Activated CD4-positive, alpha-beta memory T cell treated with anti-CD3 and anti-CD28 coated beads, Interleukin-2, amount 10 ng/mL, durations not matched to agents 7 days and 5 days (primary cell): ENCODE measurements at regions of chr1 and their contacts with region 1.

Region 1: DNA sequence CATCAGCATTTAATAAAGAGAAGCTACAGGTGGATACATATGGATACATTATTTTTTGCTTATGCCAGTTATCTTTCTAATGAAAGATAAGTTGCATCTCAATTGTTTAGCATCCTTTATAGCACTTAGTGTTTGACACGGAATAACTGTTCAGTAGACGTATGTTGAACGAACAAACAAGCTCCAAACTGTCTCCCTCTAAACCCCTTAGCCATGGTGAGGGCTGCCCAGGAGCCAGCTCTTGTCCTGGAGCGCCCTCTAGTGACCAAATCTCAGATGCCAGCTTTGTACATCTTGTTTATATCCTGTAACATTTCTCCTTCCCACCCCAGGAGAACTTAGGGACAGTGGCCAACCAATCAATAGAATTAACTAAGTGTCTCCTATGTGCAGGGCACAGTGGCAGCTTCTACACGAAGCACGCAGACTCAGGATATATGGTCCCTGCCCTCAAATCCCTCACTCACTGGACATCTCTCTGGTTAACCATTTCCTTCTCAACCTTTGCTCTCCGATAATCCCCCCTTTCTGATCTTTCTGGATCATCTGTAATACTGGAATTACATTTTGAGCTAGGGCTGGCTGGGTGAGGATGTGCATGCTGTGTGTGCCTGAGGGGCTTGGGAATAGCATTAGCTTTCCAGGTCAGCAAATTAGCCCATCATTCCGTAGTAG is 22.9 kb downstream of the KCNA10 start:
- DNase-seq: peak; percentile 82
- H3K4me3 Mint-ChIP-seq: no peak overlapping the region
- H3K27ac Mint-ChIP-seq: no peak overlapping the region
- H3K4me1 Mint-ChIP-seq: peaks cover 4% of the 10 kb centered on the region
- H3K27me3 Mint-ChIP-seq: peaks cover 3% of the 10 kb centered on the region

Region 2: DNA sequence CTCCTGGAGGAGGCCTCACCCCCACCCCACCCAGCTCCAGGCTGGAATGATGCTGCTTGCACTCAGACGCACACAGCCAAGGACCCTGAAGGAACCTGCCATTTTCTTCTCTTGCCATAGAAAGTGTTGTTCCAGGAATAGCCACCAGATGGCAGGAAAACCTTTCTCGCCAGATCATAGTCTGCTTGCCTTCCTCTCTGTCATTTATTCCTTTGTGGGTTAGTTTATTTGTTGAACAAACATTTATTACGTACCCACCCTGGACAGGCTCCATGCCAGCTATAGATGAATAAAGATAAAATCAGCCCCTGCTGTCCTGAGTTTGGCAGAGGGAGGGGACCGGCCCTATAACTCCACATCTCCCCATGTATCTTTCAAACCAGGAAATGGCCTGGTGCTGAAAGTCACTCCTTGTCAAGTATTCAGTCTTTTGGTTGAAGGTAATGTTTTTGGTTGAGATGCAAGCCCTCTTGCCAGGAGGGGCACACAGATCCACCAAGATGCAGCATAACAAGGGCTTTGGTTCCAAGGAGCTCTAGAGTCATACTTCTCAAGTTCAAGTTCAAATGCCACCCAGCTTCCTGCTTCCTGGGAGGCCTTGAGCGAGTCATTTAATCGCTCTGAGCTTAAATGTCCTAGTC is 292.9 kb before region 1 on chr1:
- CTCF ChIA-PET with region 1: interaction called, 48 read pairs
- POLR2A ChIA-PET with region 1: interaction called, 3 read pairs
- DNase-seq: peak; percentile 73
- H3K4me3 Mint-ChIP-seq: no peak overlapping the region
- H3K27ac Mint-ChIP-seq: peak overlapping the region; percentile 66
- H3K4me1 Mint-ChIP-seq: peaks cover 19% of the 10 kb centered on the region
- H3K27me3 Mint-ChIP-seq: no peaks in the 10 kb centered on the region

Region 3: DNA sequence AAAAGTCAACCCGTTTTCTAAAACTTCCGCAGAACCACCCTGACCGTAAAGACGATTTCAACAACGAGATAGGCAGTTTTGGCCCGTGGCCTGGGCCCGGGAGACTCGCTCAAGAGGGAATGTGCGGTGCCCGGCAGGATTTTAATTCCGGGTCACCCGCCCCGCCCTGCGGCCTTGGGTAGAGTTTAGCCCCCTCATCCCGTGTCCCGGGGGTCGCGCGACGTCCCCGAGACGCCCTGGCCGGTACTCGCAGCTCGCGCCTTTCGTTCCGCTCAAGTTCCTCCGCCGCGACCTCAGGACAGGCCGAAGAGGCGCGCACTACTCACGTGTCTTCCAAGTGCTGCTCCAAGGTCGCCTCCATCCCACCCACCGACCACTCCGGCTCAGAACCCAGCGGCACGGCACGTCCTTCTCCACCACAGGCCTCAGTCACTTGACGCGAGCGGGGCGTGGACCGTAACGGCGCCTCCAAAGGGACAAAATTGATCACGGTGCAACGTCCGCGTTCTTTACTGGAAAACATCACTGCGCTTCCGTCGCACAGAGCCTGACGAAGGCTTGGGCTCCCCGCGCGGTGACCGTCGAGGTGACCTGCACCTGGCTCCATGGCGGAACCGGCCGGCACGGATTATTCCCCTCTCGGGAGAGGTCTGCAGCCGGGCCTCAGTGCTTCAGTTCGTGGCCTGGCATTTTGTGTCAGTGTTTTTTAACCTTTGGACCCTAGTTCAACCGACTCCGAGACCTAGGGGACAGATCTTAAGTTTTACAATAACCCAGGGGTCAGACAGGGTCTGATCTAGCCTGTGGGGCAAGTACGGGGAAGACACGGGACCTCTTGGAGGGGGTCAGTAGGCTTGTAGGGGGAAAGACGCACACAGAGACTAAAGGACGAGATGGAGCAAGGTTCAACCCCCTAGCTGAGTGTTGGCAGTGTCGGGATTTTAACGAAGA is 88.5 kb before region 1 on chr1 and contains the start of gene LAMTOR5:
- CTCF ChIA-PET with region 1: interaction called, 100 read pairs
- POLR2A ChIA-PET with region 1: interaction called, 6 read pairs
- DNase-seq: peak; percentile 94
- H3K4me3 Mint-ChIP-seq: peak within 1 kb of the TSS; percentile 95
- H3K27ac Mint-ChIP-seq: peak within 1 kb of the TSS; percentile 96
- H3K4me1 Mint-ChIP-seq: peaks cover 27% of the 10 kb centered on the region
- H3K27me3 Mint-ChIP-seq: no peaks in the 10 kb centered on the region
- total RNA-seq, gene LAMTOR5: 127 to 128 TPM

Region 4: DNA sequence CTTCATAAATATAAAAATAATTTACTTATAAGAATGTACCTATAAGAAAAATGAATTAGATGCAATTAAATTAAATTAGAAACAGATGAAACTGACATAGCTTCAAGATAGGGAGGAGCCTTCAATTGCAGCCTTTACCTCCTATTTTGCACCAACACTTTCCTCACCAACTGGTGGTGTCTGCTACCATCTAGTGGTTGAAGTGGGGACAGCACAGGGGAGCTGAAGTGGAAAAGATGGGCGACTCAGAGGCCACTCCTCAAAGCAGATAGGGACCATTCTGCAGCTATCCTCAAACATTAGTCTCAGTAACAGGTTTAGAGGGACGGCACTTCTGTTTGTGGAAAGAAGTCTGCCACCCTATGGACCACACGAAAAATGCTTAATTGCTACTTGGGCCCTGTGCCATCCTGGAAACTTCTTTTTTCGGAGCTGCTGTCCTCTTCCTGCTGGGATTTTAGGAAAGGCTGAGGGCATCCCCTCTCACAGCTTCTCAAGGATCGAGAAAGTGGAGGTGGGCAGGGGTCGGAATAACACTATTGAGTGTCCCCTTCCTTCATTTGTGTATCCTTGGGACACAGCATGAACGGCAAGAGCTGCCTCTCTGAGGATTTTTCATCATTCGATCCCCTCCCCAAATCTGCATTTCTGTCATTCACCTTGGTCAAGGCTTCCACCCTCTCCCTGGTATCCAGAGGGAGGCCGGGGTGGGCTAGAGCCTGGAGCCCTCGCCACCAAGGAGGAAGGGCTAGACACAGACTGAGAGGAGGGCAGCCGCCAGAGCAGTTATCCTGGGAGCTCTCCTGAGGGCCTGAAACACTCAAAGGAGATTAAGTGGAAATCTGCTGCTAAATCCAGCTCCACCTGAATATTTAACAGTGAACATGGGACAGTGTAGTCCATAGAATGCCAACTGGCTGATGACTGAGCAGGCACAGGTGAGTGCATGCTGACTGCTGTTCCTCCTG is 35.5 kb before region 1 on chr1:
- CTCF ChIA-PET with region 1: interaction called, 46 read pairs
- POLR2A ChIA-PET with region 1: no interaction called
- DNase-seq: peak; percentile 85
- H3K4me3 Mint-ChIP-seq: no peak overlapping the region
- H3K27ac Mint-ChIP-seq: no peak overlapping the region
- H3K4me1 Mint-ChIP-seq: no peaks in the 10 kb centered on the region
- H3K27me3 Mint-ChIP-seq: no peaks in the 10 kb centered on the region

Region 5: GRCh38 chr1:110482662-110483307 is 13.3 kb before region 1 on chr1:
- CTCF ChIA-PET with region 1: interaction called, 18 read pairs
- POLR2A ChIA-PET with region 1: no interaction called
- DNase-seq: no peak
- H3K4me3 Mint-ChIP-seq: no peak overlapping the region
- H3K27ac Mint-ChIP-seq: no peak overlapping the region
- H3K4me1 Mint-ChIP-seq: no peaks in the 10 kb centered on the region
- H3K27me3 Mint-ChIP-seq: peaks cover 34% of the 10 kb centered on the region

Region 6: DNA sequence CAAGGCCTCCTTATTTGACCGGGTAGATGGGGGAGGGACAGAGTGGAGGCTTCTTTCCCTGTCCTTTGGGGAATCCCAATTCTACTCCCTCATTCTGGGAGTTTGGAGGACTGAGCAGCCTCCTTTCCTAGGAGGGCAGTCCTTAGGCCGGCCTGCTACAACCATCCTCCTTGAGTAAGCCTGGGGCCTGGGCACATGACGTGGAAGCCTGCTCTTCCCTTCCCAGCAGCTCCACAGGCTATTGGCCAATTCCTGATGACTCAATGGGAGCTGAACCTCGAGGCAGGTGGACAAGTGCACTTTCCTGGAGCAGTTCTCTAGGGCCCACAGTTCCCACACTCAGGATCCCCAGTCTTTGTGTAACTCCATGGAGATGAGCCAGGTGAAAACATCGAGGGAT is 19.8 kb after region 1 on chr1:
- CTCF ChIA-PET with region 1: interaction called, 31 read pairs
- POLR2A ChIA-PET with region 1: no interaction called
- DNase-seq: no peak
- H3K4me3 Mint-ChIP-seq: no peak overlapping the region
- H3K27ac Mint-ChIP-seq: no peak overlapping the region
- H3K4me1 Mint-ChIP-seq: no peaks in the 10 kb centered on the region
- H3K27me3 Mint-ChIP-seq: peaks cover 7% of the 10 kb centered on the region

Region 7: GRCh38 chr1:110591956-110592355 is 95.9 kb after region 1 on chr1:
- CTCF ChIA-PET with region 1: no interaction called
- POLR2A ChIA-PET with region 1: no interaction called
- DNase-seq: no peak
- H3K4me3 Mint-ChIP-seq: no peak overlapping the region
- H3K27ac Mint-ChIP-seq: no peak overlapping the region
- H3K4me1 Mint-ChIP-seq: peaks cover 32% of the 10 kb centered on the region
- H3K27me3 Mint-ChIP-seq: peaks cover 9% of the 10 kb centered on the region

Region 8: DNA sequence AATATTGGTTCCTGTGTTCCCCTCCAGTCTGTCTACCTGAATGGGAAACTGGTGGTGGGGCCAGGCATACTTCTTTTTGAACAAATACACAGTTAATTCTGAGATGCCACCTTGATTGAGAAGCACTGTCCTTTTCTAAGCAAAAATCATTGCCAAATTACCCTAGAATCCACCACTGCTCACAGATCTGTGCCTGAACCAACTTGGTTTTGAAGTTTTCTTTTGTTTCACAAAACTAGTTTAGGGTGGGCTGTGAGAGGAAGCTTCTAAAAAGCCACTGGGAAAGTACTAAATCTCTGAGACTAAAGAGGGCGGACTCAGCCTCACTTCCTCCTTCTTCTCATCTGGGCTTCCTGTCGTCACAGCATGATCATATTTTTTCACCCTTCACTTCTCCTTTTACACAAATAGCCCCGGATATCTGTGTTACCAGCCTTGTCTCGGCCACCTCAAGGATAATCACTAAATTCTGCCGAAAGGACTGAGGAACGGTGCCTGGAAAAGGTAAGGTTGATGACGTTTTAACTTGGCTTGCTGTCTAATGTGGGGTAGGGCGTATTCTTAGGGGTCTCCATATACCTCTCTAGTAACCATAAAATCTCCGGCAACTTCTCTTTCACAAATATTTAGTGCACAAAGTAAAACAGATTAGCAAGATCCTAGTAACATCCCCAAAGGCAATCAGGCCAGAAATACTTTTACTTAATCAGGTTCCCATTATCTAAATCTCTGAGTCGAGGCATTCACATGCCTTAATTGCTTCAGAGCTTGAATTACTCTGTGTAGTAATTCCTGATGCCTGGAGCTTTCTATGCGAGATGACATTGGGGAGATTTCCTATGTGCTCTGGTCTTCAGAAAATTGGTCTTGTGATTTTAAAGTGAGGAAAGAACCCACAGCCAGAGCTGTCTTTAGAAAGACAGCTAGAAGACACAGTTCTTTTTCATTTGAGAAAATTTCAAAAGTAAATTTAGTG is 377.0 kb after region 1 on chr1 and contains the start of gene CD53:
- CTCF ChIA-PET with region 1: no interaction called
- POLR2A ChIA-PET with region 1: no interaction called
- DNase-seq: peak; percentile 64
- H3K4me3 Mint-ChIP-seq: peak within 1 kb of the TSS; percentile 97
- H3K27ac Mint-ChIP-seq: peak within 1 kb of the TSS; percentile 97
- H3K4me1 Mint-ChIP-seq: peaks cover 34% of the 10 kb centered on the region
- H3K27me3 Mint-ChIP-seq: no peaks in the 10 kb centered on the region
- total RNA-seq, gene CD53: 657 to 659 TPM